ENCODE measurements at regions of chr3 and their contacts with region 1.

Region 1: DNA sequence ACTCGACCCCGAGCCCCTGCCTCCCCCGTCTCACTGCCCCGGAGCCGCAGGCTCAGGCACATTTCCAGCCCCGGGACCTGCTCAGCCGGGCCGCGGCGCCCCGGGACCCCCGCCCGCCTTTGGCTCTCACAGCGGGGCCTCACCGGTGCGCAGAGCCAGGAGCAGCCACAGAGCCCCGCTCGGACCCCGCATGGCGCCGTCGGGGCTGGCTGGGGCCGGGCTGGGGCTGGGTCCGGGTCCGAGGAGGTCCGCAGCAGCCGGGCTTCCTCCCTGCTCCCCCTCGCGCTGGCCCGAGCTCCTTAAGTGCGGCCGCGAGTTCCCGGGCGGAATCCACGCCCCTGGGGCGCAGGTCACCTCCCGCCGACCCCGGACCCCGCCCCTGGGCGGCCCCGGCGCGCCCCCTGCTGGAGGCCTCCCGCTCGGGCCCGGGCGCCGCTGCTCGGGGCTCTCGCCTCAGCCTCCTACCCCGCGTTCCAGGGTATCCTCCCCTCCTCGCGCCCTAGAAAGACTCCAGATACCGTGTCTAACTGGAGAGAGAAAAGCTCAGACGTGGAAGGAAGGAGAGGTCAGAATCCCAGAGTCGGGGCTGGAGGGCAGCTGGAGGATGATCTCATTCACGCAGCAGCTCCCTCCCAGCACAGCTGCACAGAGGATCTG is at the start of gene MELTF:
- DNase-seq: peak; percentile 70
- ATAC-seq: peak; percentile 93
- H3K4me3 Mint-ChIP-seq: peak within 1 kb of the TSS; percentile 73
- H3K27ac Mint-ChIP-seq: no peak within 1 kb of the TSS
- H3K4me1 Mint-ChIP-seq: peaks cover 4% of the 10 kb centered on the region
- H3K27me3 Mint-ChIP-seq: peaks cover 15% of the 10 kb centered on the region
- CTCF ChIP-seq: peak; percentile 95
- total RNA-seq, gene MELTF: 3.4 to 3.5 TPM

Region 2: DNA sequence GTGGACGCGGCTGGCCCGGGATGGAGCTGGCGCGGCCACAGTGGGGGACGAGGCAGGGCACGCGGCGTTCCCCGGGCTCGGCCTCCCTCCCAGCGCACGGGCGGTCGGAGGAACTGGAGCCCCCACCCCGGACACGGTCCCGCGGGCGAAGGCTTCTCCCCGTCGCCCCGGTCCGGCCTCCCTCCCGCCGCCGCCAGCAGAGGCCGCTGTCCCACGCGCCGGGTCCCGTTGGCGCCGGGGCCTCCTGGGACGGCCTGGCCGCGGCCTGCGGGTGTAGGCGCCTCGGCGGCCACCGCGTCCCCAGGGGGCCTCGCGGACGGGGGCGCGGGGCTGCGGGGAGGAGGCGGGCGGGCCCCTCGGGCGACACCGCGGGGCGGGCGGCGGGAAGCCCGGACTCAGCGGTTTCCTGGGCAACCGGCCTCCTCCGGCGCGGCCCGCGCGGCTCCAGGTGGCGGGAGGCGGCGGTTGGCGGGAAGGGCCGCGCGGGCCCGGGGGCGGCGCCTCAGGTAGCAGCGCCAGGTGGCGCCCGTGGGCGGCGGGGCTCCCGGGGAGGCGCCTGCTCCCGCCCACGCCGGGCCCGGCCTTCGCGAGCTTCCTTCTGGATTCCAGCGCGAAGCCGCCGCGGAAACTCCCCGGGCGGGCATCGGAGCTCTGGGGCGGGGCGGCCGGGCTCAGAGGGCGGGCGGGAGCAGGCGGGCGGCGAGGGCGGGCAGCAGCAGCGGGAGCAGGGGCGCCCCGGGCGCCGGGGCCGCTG is 26.8 kb before region 1 on chr3:
- CTCF ChIA-PET with region 1: interaction called, 50 read pairs
- POLR2A ChIA-PET with region 1: interaction called, 17 read pairs
- intact Hi-C with region 1: no loop called
- DNase-seq: peak; percentile 82
- ATAC-seq: peak; percentile 80
- H3K4me3 Mint-ChIP-seq: no peak overlapping the region
- H3K27ac Mint-ChIP-seq: no peak overlapping the region
- H3K4me1 Mint-ChIP-seq: peaks cover 8% of the 10 kb centered on the region
- H3K27me3 Mint-ChIP-seq: no peaks in the 10 kb centered on the region
- CTCF ChIP-seq: peak; percentile 76

Region 3: GRCh38 chr3:197041875-197042488 is 12.3 kb after region 1 on chr3:
- CTCF ChIA-PET with region 1: interaction called, 45 read pairs
- POLR2A ChIA-PET with region 1: no interaction called
- intact Hi-C with region 1: no loop called
- DNase-seq: no peak
- ATAC-seq: no peak
- H3K4me3 Mint-ChIP-seq: no peak overlapping the region
- H3K27ac Mint-ChIP-seq: no peak overlapping the region
- H3K4me1 Mint-ChIP-seq: no peaks in the 10 kb centered on the region
- H3K27me3 Mint-ChIP-seq: no peaks in the 10 kb centered on the region
- CTCF ChIP-seq: no peak